ENCODE measurements at regions of chr16 and their contacts with region 1.

Region 1: DNA sequence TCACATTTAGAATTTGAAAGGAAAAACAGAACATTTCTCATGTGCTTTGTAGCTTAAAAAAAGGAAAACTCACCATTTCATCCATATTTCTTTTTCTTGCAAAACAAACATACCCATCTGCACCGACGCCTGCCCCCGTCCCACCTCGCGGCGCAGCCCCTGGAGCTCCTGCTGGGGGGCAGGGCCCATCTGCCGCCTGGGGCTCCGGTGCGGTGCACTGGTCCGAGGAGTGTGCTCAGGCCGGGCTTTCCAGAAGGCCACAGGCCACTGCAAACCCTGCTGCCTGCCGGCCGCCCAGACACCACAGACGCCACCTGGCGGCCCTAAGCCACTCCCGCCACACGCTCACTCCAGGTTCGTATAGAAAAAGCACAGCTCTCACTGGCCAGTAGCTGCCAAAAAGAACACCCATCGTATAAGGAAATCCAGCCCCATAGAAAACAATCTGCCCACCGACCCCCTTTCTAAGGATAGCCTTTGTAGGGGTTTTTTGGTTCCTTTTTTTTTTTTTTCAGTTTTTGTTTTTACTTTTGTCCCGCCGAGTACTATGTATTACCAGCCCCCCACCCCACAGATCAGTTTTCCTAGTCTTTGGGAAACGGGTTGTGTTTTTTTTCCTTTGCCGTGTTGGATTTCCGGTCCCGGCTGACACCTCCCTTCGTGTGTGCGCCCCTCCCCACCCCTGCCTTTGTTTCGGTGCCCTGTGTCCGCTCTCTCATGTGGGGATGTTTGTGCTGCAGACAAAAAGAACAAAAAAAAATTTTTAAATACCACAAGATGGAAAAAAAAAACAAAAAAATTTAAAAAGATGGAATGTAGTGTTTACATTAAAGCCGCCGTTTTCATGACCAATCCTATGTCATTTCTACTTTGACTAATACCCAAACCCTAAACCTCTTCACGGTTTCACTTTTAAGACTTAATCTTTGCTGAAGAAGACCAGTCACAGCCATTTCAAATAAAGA is 68.8 kb downstream of the AMFR start:
- DNase-seq: peak; percentile 70
- H3K4me3 ChIP-seq: peak overlapping the region; percentile 41
- H3K27ac ChIP-seq: peak overlapping the region; percentile 94
- H3K27me3 ChIP-seq: no peaks in the 10 kb centered on the region
- CTCF ChIP-seq: peak; percentile 90

Region 2: GRCh38 chr16:55944377-55944802 is 412.2 kb before region 1 on chr16:
- CTCF ChIA-PET with region 1: interaction called, 12 read pairs
- POLR2A ChIA-PET with region 1: no interaction called
- DNase-seq: peak; percentile 30
- H3K4me3 ChIP-seq: no peak overlapping the region
- H3K27ac ChIP-seq: no peak overlapping the region
- H3K27me3 ChIP-seq: no peaks in the 10 kb centered on the region
- CTCF ChIP-seq: peak; percentile 98

Region 3: GRCh38 chr16:56300891-56301850 is 55.4 kb before region 1 on chr16:
- CTCF ChIA-PET with region 1: no interaction called
- POLR2A ChIA-PET with region 1: no interaction called
- DNase-seq: no peak
- H3K4me3 ChIP-seq: no peak overlapping the region
- H3K27ac ChIP-seq: no peak overlapping the region
- H3K27me3 ChIP-seq: peaks cover 12% of the 10 kb centered on the region
- CTCF ChIP-seq: no peak

Region 4: DNA sequence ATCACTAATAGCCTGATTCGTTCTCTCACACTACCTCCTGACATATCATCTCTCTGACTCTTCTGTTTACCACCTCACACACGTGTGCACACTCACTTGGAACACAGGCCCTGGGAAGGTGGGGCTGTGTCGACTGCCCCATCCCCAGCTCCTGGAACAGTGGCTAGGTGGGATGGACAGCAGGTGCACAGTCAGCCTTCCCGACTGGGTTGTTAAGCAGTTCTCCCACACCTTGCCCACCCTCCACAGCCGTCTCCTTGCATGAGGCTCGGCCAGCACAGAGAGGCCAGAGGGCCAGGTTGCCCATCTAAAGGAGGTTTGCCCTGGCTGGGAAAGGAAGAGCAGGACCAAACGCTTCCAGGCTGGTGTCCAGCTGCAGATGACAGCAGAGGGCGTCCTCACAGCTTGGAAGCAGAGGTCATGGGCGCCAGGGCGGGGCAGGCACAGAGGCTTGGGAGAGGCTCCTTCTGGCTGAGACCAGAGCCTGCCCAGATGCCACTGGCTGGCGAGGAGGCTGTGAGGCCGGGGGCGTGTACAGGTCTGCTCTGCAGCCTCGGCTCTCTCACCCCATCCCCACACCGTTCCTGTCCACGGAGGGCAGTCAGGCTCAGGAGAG is 24.0 kb before region 1 on chr16:
- CTCF ChIA-PET with region 1: interaction called, 16 read pairs
- POLR2A ChIA-PET with region 1: interaction called, 5 read pairs
- DNase-seq: no peak
- H3K4me3 ChIP-seq: no peak overlapping the region
- H3K27ac ChIP-seq: no peak overlapping the region
- H3K27me3 ChIP-seq: no peaks in the 10 kb centered on the region
- CTCF ChIP-seq: peak; percentile 34

Region 5: DNA sequence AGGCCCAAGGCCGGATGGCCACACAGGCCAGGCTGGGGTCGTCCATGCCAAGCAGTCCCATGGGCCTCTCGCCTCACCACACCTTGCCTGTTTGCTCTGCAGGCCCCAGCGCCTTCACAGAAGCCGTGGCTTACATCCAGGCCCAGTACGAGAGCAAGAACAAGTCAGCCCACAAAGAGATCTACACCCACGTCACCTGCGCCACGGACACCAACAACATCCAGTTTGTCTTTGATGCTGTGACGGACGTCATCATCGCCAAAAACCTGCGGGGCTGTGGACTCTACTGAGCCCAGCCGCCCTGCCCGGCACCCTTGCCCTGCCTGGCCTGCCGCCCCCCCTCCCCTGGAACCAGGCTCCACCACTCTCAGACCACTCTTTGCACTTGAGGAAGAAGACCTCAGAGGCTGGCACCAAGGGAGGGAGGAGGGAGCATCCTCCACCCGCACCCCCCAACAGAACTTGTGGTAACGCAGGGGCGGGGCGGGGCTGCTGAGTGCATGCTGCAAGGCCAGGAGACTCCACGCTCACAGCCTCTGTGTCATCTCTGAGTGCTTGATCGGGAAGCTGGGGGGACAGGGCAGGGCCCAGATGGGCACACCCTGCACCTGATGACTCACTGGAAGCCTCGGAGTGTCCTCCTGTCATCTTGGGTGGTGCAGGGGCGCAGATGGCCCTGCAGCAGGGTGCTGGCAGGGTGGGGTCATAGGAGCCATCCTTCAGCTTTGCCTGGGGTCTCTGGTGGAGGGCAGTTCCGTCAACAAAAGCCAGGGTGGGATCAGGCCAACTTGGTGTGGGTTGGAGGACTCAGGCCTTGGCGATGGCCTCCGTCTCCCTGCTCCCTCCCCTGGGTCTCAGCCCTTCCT is 12.7 kb before region 1 on chr16:
- CTCF ChIA-PET with region 1: interaction called, 13 read pairs
- POLR2A ChIA-PET with region 1: interaction called, 4 read pairs
- DNase-seq: no peak
- H3K4me3 ChIP-seq: no peak overlapping the region
- H3K27ac ChIP-seq: no peak overlapping the region
- H3K27me3 ChIP-seq: no peaks in the 10 kb centered on the region
- CTCF ChIP-seq: no peak

Region 6: DNA sequence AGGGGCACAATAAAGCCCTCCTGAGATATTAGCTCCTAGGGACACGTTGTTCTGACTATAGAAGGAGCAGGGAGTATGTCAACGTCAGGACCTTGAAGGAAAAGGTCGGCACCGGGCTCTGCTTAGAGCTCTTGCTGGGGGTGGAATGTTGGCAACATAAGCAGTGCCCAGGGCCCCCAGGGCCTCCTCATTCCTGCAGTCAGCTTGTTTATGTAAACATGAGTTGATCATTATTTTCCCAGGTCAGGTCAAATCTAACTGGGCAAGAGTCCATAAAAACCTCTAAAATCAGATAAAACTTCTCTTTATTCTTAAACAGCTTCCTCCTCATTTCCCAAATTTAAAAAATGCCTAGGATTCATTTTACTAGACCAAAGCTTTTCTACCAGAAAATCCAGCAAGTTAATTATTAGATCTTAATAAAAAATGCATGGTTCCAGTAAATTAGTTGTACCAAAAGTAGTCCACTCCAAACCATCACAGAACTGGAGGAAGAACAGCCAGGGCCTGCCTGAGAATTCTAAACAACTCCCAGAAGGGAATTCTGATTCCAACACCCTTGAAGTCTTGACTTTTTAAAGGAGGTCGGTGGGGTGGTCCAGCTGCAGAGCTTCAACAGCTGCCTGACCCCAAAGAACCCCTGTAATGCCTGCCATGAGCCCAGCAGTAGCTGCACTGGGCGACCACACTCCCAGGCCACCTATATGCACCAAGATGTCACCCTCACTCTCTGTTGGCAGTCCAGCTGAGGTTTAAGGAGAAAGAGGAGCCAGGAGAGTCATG is 14.5 kb after region 1 on chr16:
- CTCF ChIA-PET with region 1: interaction called, 28 read pairs
- POLR2A ChIA-PET with region 1: no interaction called
- DNase-seq: no peak
- H3K4me3 ChIP-seq: no peak overlapping the region
- H3K27ac ChIP-seq: peak overlapping the region; percentile 4
- H3K27me3 ChIP-seq: no peaks in the 10 kb centered on the region
- CTCF ChIP-seq: no peak

Region 7: DNA sequence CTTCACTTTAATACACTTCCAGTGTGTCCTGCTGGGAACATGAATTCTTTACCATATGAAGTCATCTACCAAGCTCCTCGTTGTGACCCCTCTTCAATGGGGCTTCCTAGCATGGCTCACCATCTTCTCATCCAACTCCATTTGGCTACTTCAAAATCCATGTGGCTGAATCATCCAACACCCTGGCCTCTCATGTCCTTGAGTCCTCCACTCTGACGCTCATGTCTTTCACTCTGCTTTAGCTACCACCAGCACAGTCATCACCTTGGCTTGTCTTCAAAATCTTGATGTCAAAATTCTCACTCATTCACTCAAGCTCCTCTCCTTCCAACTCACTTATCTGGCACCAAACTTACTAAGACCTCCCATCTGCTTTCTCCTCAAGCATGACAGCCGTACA is 33.0 kb after region 1 on chr16:
- CTCF ChIA-PET with region 1: interaction called, 16 read pairs
- POLR2A ChIA-PET with region 1: no interaction called
- DNase-seq: peak; percentile 83
- H3K4me3 ChIP-seq: no peak overlapping the region
- H3K27ac ChIP-seq: peak overlapping the region; percentile 83
- H3K27me3 ChIP-seq: no peaks in the 10 kb centered on the region
- CTCF ChIP-seq: no peak